Mammary epithelial cell (primary cell): ENCODE measurements at regions of chr19 and their contacts with region 1.

Region 1: GRCh38 chr19:7410946-7411345 is 62.2 kb downstream of the ARHGEF18 start:
- DNase-seq: no peak
- H3K4me3 ChIP-seq: no peak overlapping the region
- H3K27ac ChIP-seq: no peak overlapping the region
- H3K4me1 ChIP-seq: peaks cover 4% of the 10 kb centered on the region
- H3K27me3 ChIP-seq: no peaks in the 10 kb centered on the region
- CTCF ChIP-seq: no peak

Region 2: GRCh38 chr19:7482584-7483439 is 71.9 kb after region 1 on chr19:
- CTCF ChIA-PET with region 1: no interaction called
- dilution Hi-C with region 1: loop called (anchors 5 kb)
- in situ Hi-C with region 1: no loop called
- intact Hi-C with region 1: no loop called
- DNase-seq: peak; percentile 28
- H3K4me3 ChIP-seq: peak overlapping the region in 1 of 3 experiments; percentile 9
- H3K27ac ChIP-seq: no peak overlapping the region
- H3K4me1 ChIP-seq: peaks cover 30% of the 10 kb centered on the region
- H3K27me3 ChIP-seq: no peaks in the 10 kb centered on the region
- CTCF ChIP-seq: no peak